ENCODE measurements at regions of chr13 and their contacts with region 1.

Region 1: DNA sequence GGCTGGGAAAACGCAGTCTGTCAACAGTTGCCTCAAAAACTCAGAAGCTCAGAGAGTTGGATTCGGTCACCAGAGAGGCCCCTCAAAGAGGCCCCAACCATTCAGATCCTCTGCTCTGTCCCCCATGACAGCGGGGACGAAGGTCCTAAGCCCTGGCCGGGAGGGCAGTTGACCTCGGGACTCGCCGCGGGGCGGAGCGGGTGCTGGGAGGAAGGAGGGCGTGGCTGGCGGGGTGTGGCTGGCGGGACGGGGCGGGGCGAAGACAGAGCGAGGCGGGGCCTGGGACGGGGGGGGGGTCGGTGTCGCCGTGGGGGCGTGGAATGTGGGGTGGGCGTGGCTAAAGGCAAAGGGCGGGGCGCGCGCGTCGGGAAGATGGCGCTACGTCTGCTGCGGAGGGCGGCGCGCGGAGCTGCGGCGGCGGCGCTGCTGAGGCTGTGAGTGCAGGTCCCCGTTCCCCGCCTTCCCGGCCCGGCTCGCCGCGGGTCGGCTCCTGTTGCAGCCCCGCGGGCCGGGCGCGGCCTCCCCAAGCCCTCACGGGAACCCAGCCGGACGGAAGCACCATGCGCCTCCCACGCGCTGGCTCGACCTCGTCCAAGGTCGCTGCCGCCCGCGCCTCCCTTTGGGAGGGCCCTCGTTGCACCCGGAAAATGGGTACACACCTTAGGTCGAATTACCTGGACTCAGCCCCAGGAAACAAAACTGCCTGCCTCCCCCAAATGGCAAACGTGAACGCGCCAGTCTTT is 105.2 kb downstream of the TM9SF2 start:
- DNase-seq: peak; percentile 77 to 89 (median 84)
- H3K4me3 ChIP-seq: peak within 1 kb of the TSS; percentile 63 to 99 (median 86)
- H3K27ac ChIP-seq: peak within 1 kb of the TSS; percentile 28 to 93 (median 83)
- H3K27me3 ChIP-seq: no peaks in the 10 kb centered on the region
- CTCF ChIP-seq: peak in 31 of 56 donors; percentile 11 to 59 (median 36)

Region 2: DNA sequence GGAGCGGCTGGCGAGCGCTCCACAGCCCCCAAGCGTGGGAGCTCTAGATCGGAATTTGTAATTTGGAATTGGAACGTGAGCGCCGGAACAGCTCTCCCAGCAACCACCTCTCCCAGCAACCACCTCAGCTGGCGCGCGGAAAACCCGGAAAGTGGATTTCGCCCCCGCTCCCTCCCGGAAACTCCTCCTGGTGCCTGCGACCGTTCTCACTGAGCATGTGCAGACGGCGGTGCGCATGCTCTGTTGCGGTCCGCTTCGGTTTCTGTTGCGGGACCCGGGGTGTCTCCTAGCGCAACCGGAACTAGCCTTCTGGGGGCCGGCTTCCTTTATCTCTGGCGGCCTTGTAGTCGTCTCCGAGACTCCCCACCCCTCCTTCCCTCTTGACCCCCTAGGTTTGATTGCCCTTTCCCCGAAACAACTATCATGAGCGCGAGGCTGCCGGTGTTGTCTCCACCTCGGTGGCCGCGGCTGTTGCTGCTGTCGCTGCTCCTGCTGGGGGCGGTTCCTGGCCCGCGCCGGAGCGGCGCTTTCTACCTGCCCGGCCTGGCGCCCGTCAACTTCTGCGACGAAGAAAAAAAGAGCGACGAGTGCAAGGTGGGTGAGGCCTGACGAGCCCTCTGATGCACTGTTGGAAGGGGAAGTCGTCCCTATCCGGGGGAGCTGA is 105.2 kb before region 1 on chr13 and contains the start of gene TM9SF2:
- intact Hi-C with region 1: loop called (anchors 2 to 5 kb)
- DNase-seq: peak; percentile 86 to 95 (median 92)
- H3K4me3 ChIP-seq: peak within 1 kb of the TSS; percentile 61 to 99 (median 88)
- H3K27ac ChIP-seq: peak within 1 kb of the TSS in 57 of 59 donors; percentile 12 to 96 (median 79)
- H3K27me3 ChIP-seq: no peaks in the 10 kb centered on the region
- CTCF ChIP-seq: peak in 31 of 56 donors; percentile 6 to 60 (median 33)
- total RNA-seq, gene TM9SF2: 37.7 to 80.9 (median 64.8) TPM

Measured in dorsolateral prefrontal cortex (tissue), 120 donors.